OCI-LY7 (cell line): ENCODE measurements at regions of chr12 and their contacts with region 1.

Region 1: DNA sequence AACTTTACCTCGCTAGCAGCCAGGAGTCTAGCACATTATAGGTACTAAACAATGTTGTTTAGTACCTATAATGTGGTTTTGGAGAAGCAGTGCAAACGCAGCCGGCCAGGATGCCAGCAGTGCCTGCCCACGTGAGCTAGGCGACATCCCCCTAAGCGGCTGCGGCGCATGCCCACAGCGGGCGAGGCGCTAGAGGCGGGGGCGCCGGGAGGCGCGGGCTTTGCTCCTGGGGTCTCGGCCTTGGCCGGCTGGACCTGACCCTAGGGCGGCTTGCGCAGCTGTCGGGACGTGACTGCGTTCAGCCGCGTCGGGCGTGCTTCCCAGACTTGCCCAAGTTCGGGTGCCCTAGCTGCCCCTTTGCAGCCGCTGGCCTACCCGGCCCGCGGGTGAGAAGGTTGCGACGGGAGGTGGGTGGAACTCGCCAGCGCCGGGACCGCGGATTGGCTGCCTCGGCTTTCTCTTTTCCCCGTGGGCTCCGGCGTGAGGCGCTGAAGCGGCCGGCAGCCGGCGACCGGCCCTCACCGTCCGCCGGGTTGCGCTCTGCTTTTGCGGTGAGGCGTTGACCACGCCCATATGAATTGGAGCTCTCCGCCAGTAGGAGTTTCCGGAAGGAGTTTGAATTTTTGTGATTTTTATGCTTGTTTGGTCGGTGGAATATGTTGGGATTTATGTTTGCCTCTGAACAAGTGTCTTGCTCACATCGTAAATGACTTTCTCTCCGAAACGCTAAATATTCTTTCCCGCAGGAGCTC is at the start of gene TMEM19:
- DNase-seq: peak; percentile 94
- H3K4me3 ChIP-seq: peak within 1 kb of the TSS; percentile 94
- H3K27ac ChIP-seq: peak within 1 kb of the TSS; percentile 99
- H3K4me1 ChIP-seq: peaks cover 45% of the 10 kb centered on the region
- CTCF ChIP-seq: peak; percentile 65
- total RNA-seq, gene TMEM19: 38.3 and 44.1 TPM in 2 replicates

Region 2: DNA sequence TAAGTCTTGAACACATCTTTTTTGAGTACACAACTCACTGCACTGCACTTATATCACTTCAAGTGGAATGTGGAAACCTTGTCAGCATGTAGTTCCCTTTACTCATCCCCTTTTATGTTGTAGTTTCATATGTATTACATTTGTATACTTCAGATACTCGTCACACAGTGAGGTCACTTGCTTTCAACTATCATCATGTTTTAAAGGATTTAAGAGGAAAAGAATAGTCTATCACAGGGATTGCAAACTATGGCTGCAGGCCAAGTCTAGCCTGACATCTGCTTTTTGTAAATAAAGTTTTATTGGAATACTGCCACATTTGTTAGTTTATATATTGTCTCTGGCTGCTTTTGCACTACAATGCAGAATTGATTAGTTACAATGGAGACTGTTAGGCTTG is 1418.5 kb before region 1 on chr12:
- CTCF ChIA-PET with region 1: no interaction called
- POLR2A ChIA-PET with region 1: no interaction called
- intact Hi-C with region 1: loop called (anchors 10 kb)
- DNase-seq: peak; percentile 10
- H3K4me3 ChIP-seq: no peak overlapping the region
- H3K27ac ChIP-seq: no peak overlapping the region
- H3K4me1 ChIP-seq: peaks cover 72% of the 10 kb centered on the region
- CTCF ChIP-seq: no peak

Region 3: GRCh38 chr12:71663561-71664294 is 22.4 kb before region 1 on chr12 and contains the start of gene ZFC3H1:
- CTCF ChIA-PET with region 1: interaction called, 5 read pairs
- POLR2A ChIA-PET with region 1: interaction called, 105 read pairs
- intact Hi-C with region 1: loop called (anchors 1 kb)
- DNase-seq: peak; percentile 99
- H3K4me3 ChIP-seq: peak within 1 kb of the TSS; percentile 84
- H3K27ac ChIP-seq: peak within 1 kb of the TSS; percentile 87
- H3K4me1 ChIP-seq: peaks cover 31% of the 10 kb centered on the region
- CTCF ChIP-seq: peak; percentile 65
- total RNA-seq, gene ZFC3H1: 31.1 and 45.8 TPM in 2 replicates

Region 4: GRCh38 chr12:71671816-71672215 is 14.3 kb before region 1 on chr12:
- CTCF ChIA-PET with region 1: interaction called, 3 read pairs
- POLR2A ChIA-PET with region 1: interaction called, 55 read pairs
- intact Hi-C with region 1: no loop called
- DNase-seq: no peak
- H3K4me3 ChIP-seq: no peak overlapping the region
- H3K27ac ChIP-seq: no peak overlapping the region
- H3K4me1 ChIP-seq: peaks cover 5% of the 10 kb centered on the region
- CTCF ChIP-seq: no peak

Region 5: GRCh38 chr12:71708658-71709057 is 22.6 kb after region 1 on chr12:
- CTCF ChIA-PET with region 1: no interaction called
- POLR2A ChIA-PET with region 1: interaction called, 16 read pairs
- intact Hi-C with region 1: no loop called
- DNase-seq: no peak
- H3K4me3 ChIP-seq: no peak overlapping the region
- H3K27ac ChIP-seq: no peak overlapping the region
- H3K4me1 ChIP-seq: no peaks in the 10 kb centered on the region
- CTCF ChIP-seq: no peak

Region 6: DNA sequence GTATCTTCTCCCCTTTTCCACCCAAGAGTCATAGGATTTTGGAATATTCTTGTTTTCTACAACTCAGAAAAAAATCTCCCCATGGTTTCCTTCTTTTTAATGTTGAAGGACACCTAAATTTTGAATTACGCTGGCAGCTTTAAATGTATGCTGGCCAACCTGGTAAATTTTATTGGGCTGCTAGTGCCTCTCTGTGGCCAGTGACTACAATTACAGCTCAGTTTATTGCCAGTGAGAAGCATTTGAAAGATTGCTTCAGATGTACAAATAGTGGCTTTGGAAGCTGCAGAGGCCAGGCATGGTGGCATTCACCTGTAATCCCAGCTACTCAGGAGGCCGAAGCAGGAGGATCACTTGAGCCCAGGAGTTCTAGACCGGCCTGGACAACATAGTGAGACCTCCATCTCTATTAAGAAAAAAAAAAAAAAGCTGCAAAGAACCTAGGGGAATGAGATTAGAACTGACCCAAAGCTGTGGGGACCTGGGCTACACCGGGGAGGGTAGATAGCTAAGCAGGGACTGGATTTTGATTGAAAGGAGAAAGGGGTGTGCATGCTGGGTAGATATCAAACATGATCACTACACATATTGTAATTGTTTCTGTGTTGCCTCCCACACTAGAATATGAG is 61.0 kb after region 1 on chr12:
- CTCF ChIA-PET with region 1: interaction called, 14 read pairs
- POLR2A ChIA-PET with region 1: interaction called, 57 read pairs
- intact Hi-C with region 1: loop called (anchors 1 kb)
- DNase-seq: peak; percentile 84
- H3K4me3 ChIP-seq: no peak overlapping the region
- H3K27ac ChIP-seq: no peak overlapping the region
- H3K4me1 ChIP-seq: peaks cover 5% of the 10 kb centered on the region
- CTCF ChIP-seq: peak; percentile 96

Region 7: GRCh38 chr12:71754461-71755145 is 68.5 kb after region 1 on chr12 and contains the start of gene RAB21:
- CTCF ChIA-PET with region 1: no interaction called
- POLR2A ChIA-PET with region 1: interaction called, 57 read pairs
- intact Hi-C with region 1: loop called (anchors 1 kb)
- DNase-seq: peak; percentile 98
- H3K4me3 ChIP-seq: peak within 1 kb of the TSS; percentile 96
- H3K27ac ChIP-seq: peak within 1 kb of the TSS; percentile 66
- H3K4me1 ChIP-seq: peaks cover 22% of the 10 kb centered on the region
- CTCF ChIP-seq: no peak; the same call in 1 of the 2 replicates
- total RNA-seq, gene RAB21: 11.7 and 18.2 TPM in 2 replicates

Region 8: GRCh38 chr12:72406111-72406510 is 720.0 kb after region 1 on chr12:
- CTCF ChIA-PET with region 1: no interaction called
- POLR2A ChIA-PET with region 1: no interaction called
- intact Hi-C with region 1: no loop called
- DNase-seq: no peak
- H3K4me3 ChIP-seq: no peak overlapping the region
- H3K27ac ChIP-seq: no peak overlapping the region
- H3K4me1 ChIP-seq: no peaks in the 10 kb centered on the region
- CTCF ChIP-seq: no peak